K562 (cell line): ENCODE measurements at regions of chr11 and their contacts with region 1.

Region 1: DNA sequence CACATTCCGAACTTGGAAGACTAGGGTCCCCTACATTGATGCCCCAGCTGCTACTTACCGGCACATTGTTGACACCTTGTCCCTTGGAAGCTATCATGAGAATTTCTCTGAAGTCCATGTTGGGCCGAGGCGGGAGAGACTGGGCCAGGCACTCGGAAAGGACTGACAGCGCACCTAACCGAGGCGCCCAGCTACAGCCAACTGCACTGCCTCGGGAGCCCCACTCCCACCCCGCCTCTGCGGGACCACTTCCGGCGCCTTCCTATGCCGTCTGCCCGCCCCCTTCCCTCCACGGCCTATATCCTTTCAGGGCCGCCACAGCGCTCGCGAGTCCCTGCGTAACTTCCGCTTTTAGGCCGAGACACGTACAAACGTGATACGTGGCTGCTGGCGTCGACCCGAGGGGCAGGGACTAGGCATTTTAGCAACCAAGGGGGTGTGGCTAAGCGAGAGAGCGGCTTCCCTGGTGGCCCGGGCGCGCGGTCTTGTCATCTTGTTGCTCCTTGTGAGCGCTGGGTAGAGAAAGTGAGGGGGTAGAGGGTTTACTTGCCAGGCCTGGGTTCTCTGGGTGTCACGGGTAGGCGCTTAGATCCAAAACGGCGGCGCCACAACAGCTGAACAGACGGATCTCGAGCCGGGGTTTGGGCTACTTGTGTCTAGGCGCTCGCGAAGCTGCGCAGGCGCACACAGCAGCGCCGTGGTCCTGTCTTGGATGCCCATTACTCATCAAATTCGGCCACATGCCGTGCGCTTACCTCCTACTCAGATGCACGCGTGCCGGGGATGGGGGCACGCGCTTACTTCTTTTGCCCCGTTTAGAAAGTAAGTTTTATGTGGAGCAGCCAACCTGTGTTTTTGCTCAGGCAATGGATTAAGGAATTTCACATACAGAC is at the start of gene SPTY2D1:
- DNase-seq: peak; percentile 91 to 100 (median 92)
- ATAC-seq: peak; percentile 98
- H3K4me3 ChIP-seq: peak within 1 kb of the TSS; percentile 95
- H3K27ac ChIP-seq: peak within 1 kb of the TSS; percentile 94
- H3K4me1 ChIP-seq: peaks cover 4 to 5% of the 10 kb centered on the region in 2 experiments; a peak in 3 of 5 replicates
- H3K27me3 ChIP-seq: no peaks in the 10 kb centered on the region
- CTCF ChIP-seq: peak in 1 of 3 experiments; percentile 22; a peak in 1 of 6 replicates
- EP300 ChIP-seq: peak; percentile 32
- POLR2A ChIP-seq: peak; percentile 97
- RAD21 ChIP-seq: 0 out of 4 replicates have a peak, but pooled peaks of 1 of the 2 experiments have one; percentile 8
- polyA plus RNA-seq, gene SPTY2D1: 3.2 to 6.1 TPM

Region 2: GRCh38 chr11:17921659-17922415 is 712.5 kb before region 1 on chr11:
- CTCF ChIA-PET with region 1: no interaction called
- POLR2A ChIA-PET with region 1: no interaction called
- in situ Hi-C with region 1: no loop called
- intact Hi-C with region 1: no loop called
- DNase-seq: peak in 2 of 4 experiments; percentile 8 to 25
- ATAC-seq: peak; percentile 70
- H3K4me3 ChIP-seq: no peak overlapping the region
- H3K27ac ChIP-seq: no peak overlapping the region
- H3K4me1 ChIP-seq: peaks cover 0 to 7% of the 10 kb centered on the region in 2 experiments; a peak in 1 of 5 replicates
- H3K27me3 ChIP-seq: no peaks in the 10 kb centered on the region
- CTCF ChIP-seq: no peak
- EP300 ChIP-seq: no peak
- POLR2A ChIP-seq: no peak
- RAD21 ChIP-seq: no peak

Region 3: DNA sequence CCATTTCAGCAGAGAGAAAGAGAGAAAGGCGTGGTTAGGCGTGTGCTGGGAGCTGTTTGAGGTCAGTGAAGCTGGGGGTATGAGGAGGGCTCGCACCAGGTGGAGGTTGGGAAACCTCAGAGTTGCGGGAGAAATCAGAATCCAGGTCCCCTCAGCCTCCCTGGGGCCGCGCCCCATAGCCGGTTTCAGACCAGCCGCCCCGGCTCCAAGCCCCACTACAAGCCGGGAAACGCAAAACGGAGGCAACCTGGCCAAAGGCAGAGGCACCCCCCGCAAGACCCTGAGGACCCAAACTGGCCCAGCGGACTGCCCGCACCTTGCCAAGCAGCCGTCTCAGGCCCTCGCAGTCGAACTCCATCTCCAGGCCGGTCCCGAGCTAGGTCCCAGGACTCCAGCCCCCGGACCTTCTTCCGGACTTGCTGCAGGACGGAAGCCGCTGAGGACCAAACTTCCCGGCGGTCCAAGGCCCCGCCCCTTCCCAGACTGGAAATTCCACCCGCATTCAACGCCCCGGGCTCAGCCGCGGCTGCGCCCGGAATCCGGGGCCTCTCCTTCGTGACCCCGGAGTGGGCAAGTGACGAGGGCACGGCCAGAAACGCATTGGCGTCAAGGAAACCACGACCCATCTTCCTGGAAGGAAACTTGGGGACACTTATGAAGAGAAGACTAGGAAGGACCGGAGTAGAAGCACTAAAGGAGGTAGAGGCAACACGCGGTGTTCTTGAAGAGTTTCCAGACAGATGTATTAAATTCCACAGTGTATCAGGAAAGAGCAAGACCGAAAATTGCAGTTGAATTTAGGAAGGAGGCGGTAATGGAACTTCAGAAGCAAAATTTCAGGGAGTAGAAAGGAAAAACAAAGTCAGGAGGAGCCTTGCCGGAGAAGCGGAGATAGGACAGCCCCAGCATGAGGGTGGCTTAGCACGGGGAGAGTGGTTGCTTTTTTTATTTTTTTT is 45.8 kb before region 1 on chr11 and contains the start of gene UEVLD:
- CTCF ChIA-PET with region 1: no interaction called
- POLR2A ChIA-PET with region 1: interaction called, 6 read pairs
- in situ Hi-C with region 1: no loop called
- intact Hi-C with region 1: loop called (anchors 5 kb)
- DNase-seq: peak; percentile 90 to 94 (median 92)
- ATAC-seq: peak; percentile 89
- H3K4me3 ChIP-seq: peak within 1 kb of the TSS; percentile 88
- H3K27ac ChIP-seq: peak within 1 kb of the TSS; percentile 56
- H3K4me1 ChIP-seq: peaks cover 17% of the 10 kb centered on the region in 2 experiments; a peak in 4 of 5 replicates
- H3K27me3 ChIP-seq: no peaks in the 10 kb centered on the region
- CTCF ChIP-seq: no peak
- EP300 ChIP-seq: no peak
- POLR2A ChIP-seq: peak; percentile 83
- RAD21 ChIP-seq: no peak
- polyA plus RNA-seq, gene UEVLD: 6.3 to 7.4 TPM

Region 4: DNA sequence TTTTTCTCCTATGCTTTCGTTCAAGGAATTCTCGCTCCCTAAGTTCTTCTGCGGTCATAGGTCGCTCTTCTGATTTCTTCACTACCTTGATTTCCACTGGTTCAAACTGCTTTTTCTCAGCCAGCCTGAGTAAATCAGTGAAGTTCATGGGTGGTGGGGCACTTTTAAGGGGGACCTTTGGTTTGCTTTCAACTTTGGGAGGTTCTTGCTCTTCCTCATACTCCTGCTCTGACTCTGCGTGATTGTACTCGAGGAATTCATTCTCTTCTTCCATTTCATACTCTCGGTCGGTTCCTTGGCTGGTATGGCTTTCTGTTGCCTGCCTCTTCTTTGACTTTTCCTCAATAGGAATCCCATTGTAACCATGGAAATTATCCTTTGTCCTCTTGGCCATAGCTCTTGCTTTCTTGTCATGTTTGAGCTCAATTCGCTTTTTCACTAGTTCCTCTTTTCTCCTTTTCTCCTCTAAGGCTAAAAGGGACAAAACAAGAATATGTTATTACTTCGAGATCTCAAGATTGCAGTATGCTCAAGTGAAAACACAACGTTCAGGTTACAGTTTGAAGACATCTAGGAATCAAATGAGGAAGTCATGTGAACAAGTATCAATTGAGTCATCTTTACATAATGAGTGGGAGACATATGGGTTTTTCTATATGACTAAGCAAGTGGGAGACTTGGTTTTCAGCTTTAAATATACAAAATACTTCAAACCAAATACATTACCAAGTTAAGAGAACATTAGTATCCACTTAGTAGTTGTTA is 18.6 kb before region 1 on chr11:
- CTCF ChIA-PET with region 1: no interaction called
- POLR2A ChIA-PET with region 1: interaction called, 32 read pairs
- in situ Hi-C with region 1: no loop called
- intact Hi-C with region 1: no loop called
- DNase-seq: peak in 1 of 4 experiments; percentile 14
- ATAC-seq: peak; percentile 55
- H3K4me3 ChIP-seq: no peak overlapping the region
- H3K27ac ChIP-seq: peak overlapping the region; percentile 72; the same call in 2 of the 3 replicates
- H3K4me1 ChIP-seq: peaks cover 5 to 11% of the 10 kb centered on the region in 2 experiments; a peak in 4 of 5 replicates
- H3K27me3 ChIP-seq: no peaks in the 10 kb centered on the region
- CTCF ChIP-seq: no peak
- EP300 ChIP-seq: peak; percentile 39; the same call in 1 of the 2 replicates
- POLR2A ChIP-seq: no peak
- RAD21 ChIP-seq: no peak